Mucosa of descending colon (tissue), 3 donors: ENCODE measurements at regions of chr9 and their contacts with region 1.

Region 1: DNA sequence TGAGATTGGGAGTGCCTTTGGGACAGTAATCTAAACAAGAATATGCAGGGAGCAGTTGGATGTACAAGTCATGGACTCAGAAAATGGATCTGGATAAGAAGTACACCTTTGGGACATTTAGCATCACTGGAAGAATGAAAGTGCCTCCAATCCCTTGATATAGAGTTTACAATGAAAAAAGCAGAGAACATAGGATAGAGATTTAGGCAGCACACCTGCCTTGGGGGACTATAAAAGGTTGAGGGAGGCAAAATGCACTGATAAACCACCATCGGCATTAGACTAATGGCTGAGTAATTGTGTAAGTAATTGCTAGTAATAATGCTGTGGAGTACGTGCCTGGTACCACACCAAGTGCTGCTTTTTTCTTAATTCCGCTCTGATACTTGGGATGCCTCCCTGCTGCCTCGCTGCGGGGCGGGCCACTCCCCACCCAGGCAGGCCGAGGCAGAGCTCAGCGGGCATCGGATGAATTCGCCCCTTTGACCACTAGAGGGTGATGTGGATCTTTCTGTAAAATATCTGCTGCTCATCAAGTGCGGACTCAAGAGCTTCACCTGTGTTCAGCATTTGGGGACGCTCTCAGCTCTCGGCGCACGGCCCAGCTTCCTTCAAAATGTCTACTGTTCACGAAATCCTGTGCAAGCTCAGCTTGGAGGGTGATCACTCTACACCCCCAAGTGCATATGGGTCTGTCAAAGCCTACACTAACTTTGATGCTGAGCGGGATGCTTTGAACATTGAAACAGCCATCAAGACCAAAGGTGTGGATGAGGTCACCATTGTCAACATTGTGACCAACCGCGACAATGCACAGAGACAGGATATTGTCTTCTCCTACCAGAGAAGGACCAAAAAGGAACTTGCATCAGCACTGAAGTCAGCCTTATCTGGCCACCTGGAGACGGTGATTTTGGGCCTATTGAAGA is 99.9 kb downstream of the ANKRD18B start:
- DNase-seq: peak in 2 of 3 donors; percentile 67 to 77
- ATAC-seq: peak; percentile 94
- H3K4me3 ChIP-seq: no peak overlapping the region
- H3K4me1 ChIP-seq: no peaks in the 10 kb centered on the region
- CTCF ChIP-seq: peak; percentile 73

Region 2: GRCh38 chr9:33721674-33722358 is 97.9 kb after region 1 on chr9:
- intact Hi-C with region 1: loop called (anchors 5 kb)
- DNase-seq: peak; percentile 84 to 93 (median 89)
- ATAC-seq: peak; percentile 99
- H3K4me3 ChIP-seq: no peak overlapping the region
- H3K4me1 ChIP-seq: no peaks in the 10 kb centered on the region
- CTCF ChIP-seq: peak; percentile 99